ENCODE measurements at regions of chr11 and their contacts with region 1.

Region 1: DNA sequence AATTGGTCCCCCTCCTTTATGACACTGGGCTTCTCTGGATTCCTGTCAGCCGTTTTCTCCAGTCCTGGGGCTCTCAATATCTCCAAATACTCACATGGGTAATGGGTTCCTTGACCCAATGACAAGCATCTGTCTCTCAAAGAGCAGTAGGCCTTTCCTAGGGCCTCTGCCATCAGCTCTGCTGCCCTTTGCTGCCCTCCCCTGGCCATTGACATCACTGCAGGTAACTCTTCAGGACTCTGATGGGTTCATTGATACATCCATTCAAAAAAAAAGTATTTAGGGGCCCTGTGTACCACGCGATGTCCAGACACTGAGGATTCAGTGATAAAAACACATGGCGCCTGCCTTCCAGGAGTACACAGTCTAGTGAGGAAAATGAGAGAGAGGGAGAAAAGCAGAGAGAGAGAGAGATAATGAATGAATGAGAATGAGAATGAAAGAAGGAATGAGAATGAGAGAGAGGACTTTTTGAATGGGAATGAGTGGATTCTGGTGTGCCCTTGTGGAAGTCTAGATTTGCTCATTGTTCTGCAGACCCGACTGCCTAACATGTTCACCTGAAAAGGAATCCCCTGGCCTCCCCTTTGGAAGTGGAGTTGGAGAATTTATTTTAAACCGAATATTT is 42.6 kb upstream of the OLFML1 start:
- DNase-seq: peak; percentile 82
- ATAC-seq: peak; percentile 84
- H3K4me3 Mint-ChIP-seq: no peak overlapping the region
- H3K27ac Mint-ChIP-seq: no peak overlapping the region
- H3K4me1 Mint-ChIP-seq: no peaks in the 10 kb centered on the region
- H3K27me3 Mint-ChIP-seq: peaks cover 8% of the 10 kb centered on the region

Region 2: GRCh38 chr11:6962673-6963072 is 480.0 kb before region 1 on chr11:
- CTCF ChIA-PET with region 1: no interaction called
- DNase-seq: no peak
- ATAC-seq: no peak
- H3K4me3 Mint-ChIP-seq: no peak overlapping the region
- H3K27ac Mint-ChIP-seq: no peak overlapping the region
- H3K4me1 Mint-ChIP-seq: no peaks in the 10 kb centered on the region
- H3K27me3 Mint-ChIP-seq: peaks cover 3% of the 10 kb centered on the region

Region 3: GRCh38 chr11:7098235-7098832 is 344.4 kb before region 1 on chr11:
- CTCF ChIA-PET with region 1: interaction called, 25 read pairs
- DNase-seq: no peak
- ATAC-seq: peak; percentile 49
- H3K4me3 Mint-ChIP-seq: no peak overlapping the region
- H3K27ac Mint-ChIP-seq: no peak overlapping the region
- H3K4me1 Mint-ChIP-seq: no peaks in the 10 kb centered on the region
- H3K27me3 Mint-ChIP-seq: peaks cover 30% of the 10 kb centered on the region

Region 4: DNA sequence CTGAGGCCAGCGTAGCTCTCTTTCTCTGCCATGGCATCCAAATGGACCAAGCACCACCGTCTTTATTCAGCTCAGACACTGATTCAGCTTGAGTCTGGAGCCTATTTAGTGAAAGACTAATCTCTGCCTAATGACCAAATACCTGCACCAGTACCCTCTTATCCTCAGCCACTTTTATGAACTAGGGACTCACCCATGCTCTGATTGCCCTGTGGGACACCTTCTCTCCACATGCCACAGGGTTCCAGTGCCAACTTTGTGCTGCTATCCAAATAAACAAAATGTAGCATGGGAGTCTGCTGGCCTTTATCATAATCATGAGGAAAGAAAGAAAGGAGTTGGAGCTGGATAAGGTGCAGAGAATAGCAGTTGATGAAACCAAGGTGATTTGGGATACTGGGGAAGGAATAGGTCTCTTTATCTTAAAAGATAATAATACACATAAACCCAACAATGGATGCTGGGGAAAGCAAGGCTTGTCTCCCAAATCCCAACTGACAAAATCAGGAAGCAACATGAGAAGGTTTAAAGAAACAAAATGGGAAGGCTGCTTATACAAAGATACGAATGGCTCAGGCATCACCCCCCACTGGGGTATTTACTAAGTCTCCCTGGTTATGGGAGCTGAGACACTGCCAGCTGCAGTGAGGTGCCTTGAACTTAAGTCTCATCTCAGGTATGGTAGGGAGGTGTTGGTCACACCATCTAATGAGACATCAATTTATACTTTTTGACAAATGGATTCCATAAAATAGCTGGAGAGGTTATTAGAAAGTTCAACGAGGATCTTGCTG is 127.7 kb before region 1 on chr11:
- CTCF ChIA-PET with region 1: no interaction called
- DNase-seq: no peak
- ATAC-seq: no peak
- H3K4me3 Mint-ChIP-seq: no peak overlapping the region
- H3K27ac Mint-ChIP-seq: no peak overlapping the region
- H3K4me1 Mint-ChIP-seq: no peaks in the 10 kb centered on the region
- H3K27me3 Mint-ChIP-seq: peaks cover 3% of the 10 kb centered on the region

Region 5: DNA sequence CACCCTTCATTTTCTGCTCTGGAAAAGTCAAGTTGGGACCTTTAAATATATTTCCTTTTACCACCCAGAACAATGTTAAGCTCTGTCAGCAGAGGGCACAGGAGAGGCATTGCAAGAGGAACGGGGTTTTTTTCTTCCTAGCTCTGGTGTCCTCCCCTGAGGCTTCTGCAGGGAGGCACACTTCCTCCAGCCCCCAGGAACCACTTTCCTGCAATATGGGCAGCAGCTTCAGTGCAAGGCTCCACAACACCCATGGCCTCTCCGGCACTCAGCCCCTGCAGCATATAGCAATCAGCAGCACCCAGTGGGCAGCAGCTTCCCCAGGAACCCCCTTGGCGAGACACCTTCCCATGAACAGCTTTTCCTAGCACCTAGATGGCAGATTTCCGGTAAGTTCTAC is 89.6 kb before region 1 on chr11:
- CTCF ChIA-PET with region 1: interaction called, 19 read pairs
- DNase-seq: peak; percentile 43
- ATAC-seq: peak; percentile 23
- H3K4me3 Mint-ChIP-seq: no peak overlapping the region
- H3K27ac Mint-ChIP-seq: no peak overlapping the region
- H3K4me1 Mint-ChIP-seq: no peaks in the 10 kb centered on the region
- H3K27me3 Mint-ChIP-seq: no peaks in the 10 kb centered on the region

Region 6: DNA sequence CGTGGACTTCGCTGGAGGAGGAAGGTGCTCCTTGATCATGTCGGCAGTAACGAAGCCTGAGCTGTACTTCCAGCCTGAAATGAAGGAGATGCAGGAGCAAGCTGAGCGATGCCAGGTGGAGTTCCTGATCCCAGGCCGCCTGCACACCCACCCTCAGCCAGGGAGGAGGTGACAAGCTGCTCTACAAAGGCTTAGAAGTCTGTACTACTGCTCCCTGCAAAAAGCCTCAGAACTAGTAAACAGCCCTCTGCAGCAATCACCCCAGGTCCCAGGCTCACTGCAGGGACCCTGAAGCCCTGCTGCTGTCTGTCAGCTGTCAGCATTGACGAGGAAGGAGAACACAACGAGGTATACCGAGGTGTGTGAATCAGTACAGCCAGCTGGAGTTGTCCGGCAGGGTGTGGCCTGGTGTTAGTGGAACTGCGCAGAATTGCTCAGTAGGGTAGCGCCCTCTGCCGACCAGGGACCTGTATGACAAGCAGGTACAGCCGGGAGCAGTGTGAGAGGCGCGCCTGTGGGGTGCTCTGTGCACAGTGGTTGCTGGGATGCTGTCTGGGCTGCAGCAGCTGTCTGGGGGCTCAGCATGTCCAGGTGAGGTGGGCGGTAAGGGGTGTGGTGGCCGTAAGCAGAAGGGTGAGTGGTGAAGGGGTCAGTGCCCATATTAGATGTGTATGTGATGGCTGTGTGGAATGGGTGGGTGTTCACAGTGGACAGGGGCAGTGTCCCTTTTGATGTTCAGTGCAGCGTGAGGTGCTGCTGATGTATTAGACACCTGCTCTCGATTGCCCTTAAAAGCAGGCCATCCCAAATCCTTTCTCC is 223.0 kb after region 1 on chr11:
- CTCF ChIA-PET with region 1: interaction called, 12 read pairs
- DNase-seq: peak; percentile 85
- ATAC-seq: peak; percentile 96
- H3K4me3 Mint-ChIP-seq: no peak overlapping the region
- H3K27ac Mint-ChIP-seq: no peak overlapping the region
- H3K4me1 Mint-ChIP-seq: no peaks in the 10 kb centered on the region
- H3K27me3 Mint-ChIP-seq: no peaks in the 10 kb centered on the region

Measured in activated CD8-positive, alpha-beta memory T cell treated with anti-CD3 and anti-CD28 coated beads, Interleukin-2, amount 10 ng/mL, durations not matched to agents 7 days and 5 days (primary cell).